ENCODE measurements at regions of chr6 and their contacts with region 1.

Region 1: DNA sequence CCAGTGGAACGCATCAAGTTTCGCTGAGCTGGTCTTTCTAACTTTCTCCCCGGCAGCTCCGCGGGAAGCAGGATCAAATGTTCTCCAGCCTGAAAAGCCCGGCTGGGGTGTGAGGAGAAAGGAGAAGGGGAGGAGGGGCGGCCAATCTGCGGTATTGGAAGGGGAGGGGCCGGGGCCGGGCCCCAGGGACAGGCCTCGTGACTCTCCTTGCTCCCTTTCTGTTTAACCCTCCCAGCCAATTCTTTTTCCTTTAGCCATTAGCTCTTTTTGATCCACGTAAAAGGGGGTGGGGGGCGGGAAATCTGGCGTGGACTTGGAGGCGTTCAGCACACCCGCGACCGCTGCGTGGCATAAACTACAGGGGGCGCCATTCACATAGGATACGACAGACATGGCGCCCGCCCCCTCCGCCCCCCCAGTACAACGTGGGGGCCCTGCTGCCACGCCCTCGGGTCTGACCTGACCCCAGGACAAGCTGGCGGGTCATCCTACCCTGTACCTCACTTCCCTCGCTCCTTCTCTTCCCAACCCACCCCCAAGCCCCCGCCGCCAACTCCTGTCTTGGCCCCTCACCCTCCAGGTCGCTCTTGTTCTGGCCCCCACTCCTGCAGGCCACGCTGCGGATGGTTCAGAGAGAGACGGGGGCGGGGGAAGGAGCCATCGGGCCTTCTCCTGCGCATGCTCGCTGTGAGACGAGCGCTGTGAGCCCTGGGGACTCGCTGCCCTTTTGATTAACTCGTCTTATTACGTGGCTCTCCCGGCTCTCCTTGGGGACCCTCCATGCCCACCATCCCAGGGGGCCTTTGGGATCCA is 7.8 kb upstream of the MDGA1 start:
- DNase-seq: peak; percentile 94
- H3K4me3 ChIP-seq: peak overlapping the region; percentile 41 to 56 (median 52)
- H3K27ac ChIP-seq: peak overlapping the region; percentile 74 to 79 (median 76)
- H3K4me1 ChIP-seq: peaks cover 0 to 14% (median 7%) of the 10 kb centered on the region in 4 donors
- H3K27me3 ChIP-seq: no peaks in the 10 kb centered on the region
- CTCF ChIP-seq: peak; percentile 28 to 85 (median 68)
- EP300 ChIP-seq: no peak
- POLR2A ChIP-seq: no peak

Region 2: DNA sequence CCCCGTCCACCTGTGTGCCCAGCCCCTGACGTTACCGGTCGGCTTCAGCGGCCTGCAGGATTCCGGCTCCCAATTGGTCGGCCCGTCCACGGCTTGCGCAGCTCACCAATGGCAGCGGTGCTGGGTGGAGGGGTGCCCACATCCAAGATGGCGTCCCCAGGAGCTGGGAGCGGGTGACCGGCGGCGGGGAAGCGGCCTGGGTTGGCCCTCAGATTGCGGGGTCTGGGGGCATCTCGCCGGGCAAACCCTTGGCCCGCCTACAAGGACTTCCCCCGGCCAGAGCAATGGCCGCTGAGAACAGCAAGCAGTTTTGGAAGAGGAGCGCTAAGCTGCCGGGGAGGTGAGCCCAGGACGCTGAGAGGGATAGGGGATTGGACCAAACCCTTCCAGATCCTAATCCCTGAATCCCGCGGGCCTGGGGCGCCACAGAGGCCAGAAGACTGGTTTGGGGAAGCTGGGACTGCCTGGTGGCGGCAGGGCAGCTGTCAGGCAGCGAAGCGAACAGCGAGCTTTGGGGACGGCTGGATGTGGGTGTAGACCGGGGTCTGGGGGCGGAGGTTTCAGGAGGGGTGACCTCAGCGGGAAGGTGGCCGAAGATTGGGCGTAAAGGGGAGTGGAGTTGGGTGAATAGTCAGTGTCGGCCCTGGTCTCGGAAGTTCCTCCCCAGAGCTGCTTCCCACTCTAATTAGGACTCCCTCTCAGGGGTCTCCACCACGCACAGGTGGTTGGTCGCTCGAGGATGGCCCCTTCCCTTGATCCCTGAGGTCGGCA is 447.6 kb before region 1 on chr6 and contains the starts of genes TBC1D22B and TMEM217:
- intact Hi-C with region 1: no loop called
- DNase-seq: peak; percentile 98
- H3K4me3 ChIP-seq: peak within 1 kb of the TSS; percentile 79 to 93 (median 81)
- H3K27ac ChIP-seq: peak within 1 kb of the TSS; percentile 77 to 85 (median 80)
- H3K4me1 ChIP-seq: peaks cover 0 to 23% (median 19%) of the 10 kb centered on the region in 4 donors
- H3K27me3 ChIP-seq: no peaks in the 10 kb centered on the region
- CTCF ChIP-seq: no peak
- EP300 ChIP-seq: no peak
- POLR2A ChIP-seq: peak in 1 of 2 donors; percentile 28
- total RNA-seq, gene TBC1D22B: 6.1 to 7.2 (median 6.3) TPM
- total RNA-seq, gene TMEM217: 0.55 to 5.3 (median 1.1) TPM in 3 of 4 donors, not detected in the other

Region 3: DNA sequence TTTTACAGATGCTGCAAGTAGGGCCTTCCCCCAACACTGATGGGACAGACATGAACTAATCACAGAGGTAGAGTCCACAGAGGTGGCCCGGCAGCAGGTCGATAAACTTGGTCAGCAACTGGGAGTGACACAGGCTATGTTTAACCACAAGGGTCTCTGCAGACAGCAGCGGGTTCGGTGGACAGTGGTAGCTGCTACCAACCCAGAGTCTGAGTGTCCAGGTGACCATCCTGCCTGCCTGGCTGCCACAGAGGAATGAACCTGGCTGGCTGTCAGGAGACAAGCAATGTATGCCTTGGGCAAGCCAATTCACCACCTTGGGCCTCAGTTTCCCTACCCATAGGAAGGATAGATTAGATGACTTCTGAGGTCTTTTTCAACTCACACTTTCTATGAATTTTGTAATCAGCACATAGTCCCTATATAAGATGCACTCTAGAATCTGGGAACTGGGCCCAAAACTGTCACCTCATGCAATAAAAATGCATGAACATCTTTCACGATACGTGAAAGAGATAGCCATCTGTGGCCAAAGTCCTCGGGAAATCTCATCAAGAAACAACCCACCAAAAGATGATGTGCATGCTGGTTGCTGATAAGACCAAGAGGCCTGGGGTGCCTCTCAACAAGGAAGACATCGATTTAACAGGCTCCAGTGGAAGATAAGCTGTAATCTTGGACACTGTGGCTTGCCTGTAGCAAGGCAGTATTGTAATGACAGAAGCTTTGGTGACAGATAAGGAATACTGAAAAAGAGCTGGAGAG is 38.2 kb before region 1 on chr6:
- intact Hi-C with region 1: no loop called
- DNase-seq: no peak
- H3K4me3 ChIP-seq: no peak overlapping the region
- H3K27ac ChIP-seq: no peak overlapping the region
- H3K4me1 ChIP-seq: no peaks in the 10 kb centered on the region
- H3K27me3 ChIP-seq: no peaks in the 10 kb centered on the region
- CTCF ChIP-seq: no peak
- EP300 ChIP-seq: no peak
- POLR2A ChIP-seq: no peak

Region 4: DNA sequence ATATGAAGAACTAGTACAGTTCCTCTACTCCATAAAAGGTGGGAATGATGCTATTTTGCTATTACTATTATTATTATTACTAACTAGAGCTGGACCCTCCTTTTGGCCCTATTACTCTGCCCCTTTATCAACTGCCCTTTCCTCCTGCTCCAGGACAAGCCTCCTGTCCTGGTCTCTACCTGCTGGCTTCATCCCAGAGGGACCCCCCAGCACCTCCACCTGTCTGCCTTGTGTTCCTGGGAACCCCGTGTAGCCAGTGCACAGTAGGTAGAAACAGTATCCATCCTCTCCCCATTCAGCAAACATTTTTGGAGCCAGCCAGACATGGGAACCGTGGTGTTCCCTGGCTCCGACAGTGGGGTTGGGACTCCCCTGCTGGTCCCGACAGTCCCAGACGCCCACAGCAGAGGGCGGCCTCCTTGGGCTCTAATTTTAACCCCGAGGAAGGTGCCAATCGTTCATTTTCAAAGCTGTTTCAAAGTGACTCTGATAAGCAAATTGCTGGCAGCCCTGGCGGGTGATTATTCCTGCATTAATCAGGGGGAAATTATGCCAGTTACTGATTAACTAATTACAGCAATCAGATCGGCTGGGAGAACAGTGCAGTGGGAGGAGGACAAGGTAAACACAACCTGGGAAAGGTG is 36.4 kb after region 1 on chr6:
- intact Hi-C with region 1: no loop called
- DNase-seq: no peak
- H3K4me3 ChIP-seq: no peak overlapping the region
- H3K27ac ChIP-seq: no peak overlapping the region
- H3K4me1 ChIP-seq: no peaks in the 10 kb centered on the region
- H3K27me3 ChIP-seq: no peaks in the 10 kb centered on the region
- CTCF ChIP-seq: no peak
- EP300 ChIP-seq: no peak
- POLR2A ChIP-seq: no peak

Region 5: GRCh38 chr6:37783856-37784584 is 78.6 kb after region 1 on chr6:
- intact Hi-C with region 1: loop called (anchors 2 kb)
- DNase-seq: peak; percentile 73
- H3K4me3 ChIP-seq: peak overlapping the region; percentile 24 to 53 (median 48)
- H3K27ac ChIP-seq: peak overlapping the region; percentile 9 to 60 (median 34)
- H3K4me1 ChIP-seq: peaks cover 0 to 18% (median 15%) of the 10 kb centered on the region in 4 donors
- H3K27me3 ChIP-seq: no peaks in the 10 kb centered on the region
- CTCF ChIP-seq: no peak
- EP300 ChIP-seq: no peak
- POLR2A ChIP-seq: no peak

Region 6: GRCh38 chr6:37940074-37940847 is 234.8 kb after region 1 on chr6:
- intact Hi-C with region 1: no loop called
- DNase-seq: peak; percentile 67
- H3K4me3 ChIP-seq: no peak overlapping the region
- H3K27ac ChIP-seq: no peak overlapping the region
- H3K4me1 ChIP-seq: peaks cover 0 to 76% (median 32%) of the 10 kb centered on the region in 4 donors
- H3K27me3 ChIP-seq: no peaks in the 10 kb centered on the region
- CTCF ChIP-seq: no peak
- EP300 ChIP-seq: no peak
- POLR2A ChIP-seq: no peak

Region 7: GRCh38 chr6:38018755-38019165 is 313.3 kb after region 1 on chr6:
- intact Hi-C with region 1: loop called (anchors 5 kb)
- DNase-seq: no peak
- H3K4me3 ChIP-seq: no peak overlapping the region
- H3K27ac ChIP-seq: no peak overlapping the region
- H3K4me1 ChIP-seq: peaks cover 0 to 60% (median 49%) of the 10 kb centered on the region in 4 donors
- H3K27me3 ChIP-seq: no peaks in the 10 kb centered on the region
- CTCF ChIP-seq: no peak
- EP300 ChIP-seq: no peak
- POLR2A ChIP-seq: no peak

Region 8: DNA sequence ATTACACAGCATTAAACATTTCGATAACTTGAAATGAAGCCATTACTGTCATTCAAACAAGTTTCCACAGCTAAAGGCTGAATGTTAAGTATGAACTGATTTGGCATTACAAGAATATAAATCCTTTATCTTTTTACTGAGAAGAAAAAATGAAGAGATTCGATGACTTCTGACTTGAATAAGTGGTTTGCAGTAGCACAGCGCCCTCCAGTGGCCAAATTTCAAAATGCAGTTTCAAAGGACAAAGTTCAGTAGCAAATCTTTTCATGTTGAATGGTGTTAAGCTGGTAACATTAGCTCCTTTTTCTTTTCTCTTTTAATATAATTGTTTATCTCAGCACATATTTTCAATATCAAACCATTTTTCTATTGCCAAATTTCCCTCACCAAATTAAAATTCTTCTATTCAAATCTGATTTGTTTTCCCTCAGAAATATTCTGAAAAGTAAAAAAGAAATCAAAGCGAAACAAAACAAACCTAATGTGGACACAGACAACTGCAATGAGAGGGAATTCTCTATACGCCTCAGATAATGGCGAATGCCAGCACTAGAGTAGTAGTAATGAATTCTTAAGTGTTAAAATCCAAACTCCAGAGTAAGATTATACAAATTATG is 788.6 kb after region 1 on chr6:
- intact Hi-C with region 1: loop called (anchors 1 kb)
- DNase-seq: peak; percentile 87
- H3K4me3 ChIP-seq: no peak overlapping the region
- H3K27ac ChIP-seq: no peak overlapping the region
- H3K4me1 ChIP-seq: peaks cover 0 to 7% (median 0%) of the 10 kb centered on the region in 4 donors
- H3K27me3 ChIP-seq: no peaks in the 10 kb centered on the region
- CTCF ChIP-seq: peak; percentile 66 to 88 (median 83)
- EP300 ChIP-seq: no peak
- POLR2A ChIP-seq: no peak

Measured in sigmoid colon (tissue), 7 donors.